PC-3 (cell line): ENCODE measurements at regions of chr18 and their contacts with region 1.

Region 1: GRCh38 chr18:48777026-48777743 is 173.6 kb downstream of the SMAD7 start:
- DNase-seq: peak; percentile 30
- ATAC-seq: peak; percentile 87
- H3K4me3 ChIP-seq: no peak overlapping the region
- H3K27ac ChIP-seq: no peak overlapping the region
- H3K4me1 ChIP-seq: no peaks in the 10 kb centered on the region
- H3K27me3 ChIP-seq: no peaks in the 10 kb centered on the region
- CTCF ChIP-seq: peak; percentile 67

Region 2: GRCh38 chr18:48913201-48913600 is 136.0 kb after region 1 on chr18:
- CTCF ChIA-PET with region 1: no interaction called
- POLR2A ChIA-PET with region 1: no interaction called
- intact Hi-C with region 1: loop called (anchors 2 kb)
- DNase-seq: peak; percentile 9
- ATAC-seq: peak; percentile 42; the same call in 1 of the 2 replicates
- H3K4me3 ChIP-seq: no peak overlapping the region
- H3K27ac ChIP-seq: no peak overlapping the region
- H3K4me1 ChIP-seq: no peaks in the 10 kb centered on the region
- H3K27me3 ChIP-seq: no peaks in the 10 kb centered on the region
- CTCF ChIP-seq: peak; percentile 40; the same call in 1 of the 2 replicates